ENCODE measurements at regions of chr1 and their contacts with region 1.

Region 1: GRCh38 chr1:39653546-39654031 is 14.1 kb upstream of the HEYL start:
- DNase-seq: peak; percentile 41 to 77
- H3K4me3 ChIP-seq: no peak overlapping the region
- H3K27ac ChIP-seq: no peak overlapping the region
- H3K4me1 ChIP-seq: no peaks in the 10 kb centered on the region
- H3K27me3 ChIP-seq: peaks cover 0 to 12% (median 4%) of the 10 kb centered on the region in 4 experiments; a peak in 3 of 7 replicates
- CTCF ChIP-seq: peak; percentile 79 to 91 (median 82)
- EP300 ChIP-seq: no peak
- POLR2A ChIP-seq: no peak
- RAD21 ChIP-seq: peak; percentile 86 to 89

Region 2: DNA sequence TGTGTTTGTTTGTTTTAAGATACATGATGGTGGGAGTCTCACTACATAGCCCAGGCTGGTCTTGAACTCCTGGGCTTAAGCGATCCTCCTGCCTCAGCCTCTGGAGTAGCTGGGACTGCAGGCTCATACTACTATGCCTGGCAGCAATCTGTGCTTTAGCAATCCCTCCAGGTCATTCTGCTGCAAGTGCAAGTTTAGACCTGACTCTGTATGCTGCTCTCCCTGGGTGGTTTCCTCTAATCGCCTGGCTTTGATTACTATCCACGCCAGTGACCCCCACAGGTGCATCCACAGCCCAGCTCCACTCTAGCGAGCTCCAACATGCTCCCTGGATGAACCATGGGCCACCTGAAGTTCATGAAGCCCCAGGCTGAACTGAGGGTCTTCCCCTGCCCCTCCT is 61.5 kb before region 1 on chr1:
- CTCF ChIA-PET with region 1: interaction called, 18 read pairs
- POLR2A ChIA-PET with region 1: interaction called, 4 read pairs
- DNase-seq: no peak
- H3K4me3 ChIP-seq: no peak overlapping the region
- H3K27ac ChIP-seq: no peak overlapping the region
- H3K4me1 ChIP-seq: no peaks in the 10 kb centered on the region; a peak in 1 of 7 replicates
- H3K27me3 ChIP-seq: peaks cover 0 to 8% (median 4%) of the 10 kb centered on the region in 4 experiments; a peak in 4 of 7 replicates
- CTCF ChIP-seq: no peak
- EP300 ChIP-seq: no peak
- POLR2A ChIP-seq: no peak
- RAD21 ChIP-seq: no peak

Region 3: DNA sequence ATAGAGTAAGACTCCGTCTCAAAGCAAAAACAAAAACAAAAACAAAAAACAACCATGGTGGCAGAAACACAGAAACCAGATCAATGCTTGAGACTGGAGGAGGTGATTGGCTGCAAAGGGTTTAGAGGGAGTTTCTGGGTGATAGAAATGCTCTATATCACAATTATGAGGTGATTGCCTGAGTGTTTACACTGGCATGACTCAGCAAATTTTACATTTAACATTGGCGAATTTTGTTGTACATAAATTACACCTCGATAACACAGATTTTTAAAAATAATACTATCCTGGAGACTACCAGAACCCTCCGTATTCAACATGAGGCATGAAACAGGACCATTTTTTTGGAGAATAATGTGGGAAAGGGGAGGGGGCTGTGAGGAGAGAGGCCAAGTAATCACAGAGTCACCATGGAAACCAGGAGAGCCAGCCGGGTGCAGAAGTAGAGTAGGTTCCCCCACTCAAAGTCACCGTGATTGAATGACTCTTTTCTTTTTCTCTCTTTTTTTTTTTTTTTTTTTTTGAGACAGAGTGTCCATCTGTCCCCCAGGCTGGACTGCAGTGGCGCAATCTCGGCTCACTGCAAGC is 38.4 kb before region 1 on chr1:
- CTCF ChIA-PET with region 1: interaction called, 469 read pairs
- POLR2A ChIA-PET with region 1: no interaction called
- DNase-seq: no peak
- H3K4me3 ChIP-seq: no peak overlapping the region
- H3K27ac ChIP-seq: no peak overlapping the region
- H3K4me1 ChIP-seq: peaks cover 0 to 1% (median 0%) of the 10 kb centered on the region in 4 experiments; a peak in 2 of 7 replicates
- H3K27me3 ChIP-seq: peaks cover 0 to 9% (median 6%) of the 10 kb centered on the region in 4 experiments; a peak in 5 of 7 replicates
- CTCF ChIP-seq: no peak
- EP300 ChIP-seq: no peak
- POLR2A ChIP-seq: no peak
- RAD21 ChIP-seq: no peak

Region 4: GRCh38 chr1:39639305-39640130 is 14.1 kb before region 1 on chr1 and contains the start of gene HEYL:
- CTCF ChIA-PET with region 1: interaction called, 278 read pairs
- POLR2A ChIA-PET with region 1: interaction called, 3 read pairs
- DNase-seq: peak; percentile 44 to 94
- H3K4me3 ChIP-seq: peak within 1 kb of the TSS; percentile 43 to 76 (median 54)
- H3K27ac ChIP-seq: no peak within 1 kb of the TSS
- H3K4me1 ChIP-seq: peaks cover 0 to 5% (median 0%) of the 10 kb centered on the region in 4 experiments; a peak in 1 of 7 replicates
- H3K27me3 ChIP-seq: peaks cover 4 to 48% (median 38%) of the 10 kb centered on the region in 4 experiments
- CTCF ChIP-seq: peak; percentile 70 to 97 (median 74)
- EP300 ChIP-seq: no peak
- POLR2A ChIP-seq: no peak
- RAD21 ChIP-seq: peak; percentile 36 to 63; a peak in 3 of 4 replicates
- total RNA-seq, gene HEYL: 3.1 and 3.5 TPM in 2 replicates

Region 5: DNA sequence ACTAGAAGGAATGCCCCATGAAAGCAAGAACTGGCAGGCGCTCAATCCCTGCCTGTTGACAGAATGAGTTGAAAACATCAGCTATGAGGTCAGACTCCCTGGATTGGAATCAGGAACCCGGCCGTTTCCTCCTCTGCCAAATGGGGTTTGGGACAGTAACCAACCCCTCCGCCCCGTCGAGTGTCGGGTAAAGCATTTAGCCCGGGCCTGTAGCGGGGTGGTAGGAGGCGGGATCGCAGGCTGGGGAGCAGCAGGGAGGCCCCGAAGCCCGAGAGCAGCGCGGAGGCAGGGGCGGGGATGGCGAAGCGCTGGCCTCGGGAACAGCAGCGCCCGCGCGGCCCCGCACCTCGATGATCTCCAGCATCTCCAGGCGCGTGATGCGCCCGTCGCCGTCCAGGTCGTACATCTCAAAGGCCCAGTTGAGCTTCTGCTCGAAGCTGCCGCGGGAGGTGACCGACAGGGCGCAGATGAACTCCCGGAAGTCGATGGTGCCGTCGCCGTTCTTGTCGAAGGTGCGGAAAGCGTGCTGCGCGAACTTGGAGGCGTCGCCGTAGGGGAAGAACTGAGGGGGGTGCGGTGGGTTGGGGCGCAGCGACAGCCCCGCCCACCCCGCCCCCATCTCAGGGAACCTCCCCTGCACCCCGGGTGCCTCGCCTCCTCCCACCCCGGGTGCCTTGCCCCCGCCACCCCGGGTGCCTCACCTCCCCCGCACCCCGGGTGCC is 30.2 kb after region 1 on chr1:
- CTCF ChIA-PET with region 1: interaction called, 14 read pairs
- POLR2A ChIA-PET with region 1: no interaction called
- DNase-seq: peak in 1 of 2 experiments; percentile 65
- H3K4me3 ChIP-seq: peak overlapping the region in 2 of 4 experiments; percentile 10 to 50; a peak in 3 of 8 replicates
- H3K27ac ChIP-seq: no peak overlapping the region
- H3K4me1 ChIP-seq: peaks cover 0 to 5% (median 1%) of the 10 kb centered on the region in 4 experiments; a peak in 2 of 7 replicates
- H3K27me3 ChIP-seq: peaks cover 68 to 96% (median 89%) of the 10 kb centered on the region in 4 experiments
- CTCF ChIP-seq: no peak
- EP300 ChIP-seq: no peak
- POLR2A ChIP-seq: no peak
- RAD21 ChIP-seq: no peak

Region 6: GRCh38 chr1:39701049-39701439 is 47.5 kb after region 1 on chr1:
- CTCF ChIA-PET with region 1: interaction called, 20 read pairs
- POLR2A ChIA-PET with region 1: no interaction called
- DNase-seq: no peak
- H3K4me3 ChIP-seq: peak overlapping the region; percentile 3 to 48 (median 22); a peak in 5 of 8 replicates
- H3K27ac ChIP-seq: no peak overlapping the region
- H3K4me1 ChIP-seq: peaks cover 0 to 17% (median 9%) of the 10 kb centered on the region in 4 experiments; a peak in 5 of 7 replicates
- H3K27me3 ChIP-seq: peaks cover 29 to 93% (median 65%) of the 10 kb centered on the region in 4 experiments
- CTCF ChIP-seq: no peak
- EP300 ChIP-seq: no peak
- POLR2A ChIP-seq: no peak
- RAD21 ChIP-seq: no peak

Measured in H1 (cell line).